ENCODE measurements at regions of chr7 and their contacts with region 1.

Region 1: GRCh38 chr7:17063045-17063383 is 181.2 kb upstream of the AGR3 start:
- DNase-seq: no peak
- H3K4me3 ChIP-seq: no peak overlapping the region
- H3K4me3 Mint-ChIP-seq: no peak overlapping the region
- H3K27ac ChIP-seq: no peak overlapping the region
- H3K27ac Mint-ChIP-seq: no peak overlapping the region
- H3K4me1 ChIP-seq: peaks cover 31 to 37% of the 10 kb centered on the region in 2 donors
- H3K4me1 Mint-ChIP-seq: peaks cover 34% of the 10 kb centered on the region
- H3K27me3 ChIP-seq: no peaks in the 10 kb centered on the region
- H3K27me3 Mint-ChIP-seq: no peaks in the 10 kb centered on the region
- CTCF ChIP-seq: peak; percentile 19

Region 2: DNA sequence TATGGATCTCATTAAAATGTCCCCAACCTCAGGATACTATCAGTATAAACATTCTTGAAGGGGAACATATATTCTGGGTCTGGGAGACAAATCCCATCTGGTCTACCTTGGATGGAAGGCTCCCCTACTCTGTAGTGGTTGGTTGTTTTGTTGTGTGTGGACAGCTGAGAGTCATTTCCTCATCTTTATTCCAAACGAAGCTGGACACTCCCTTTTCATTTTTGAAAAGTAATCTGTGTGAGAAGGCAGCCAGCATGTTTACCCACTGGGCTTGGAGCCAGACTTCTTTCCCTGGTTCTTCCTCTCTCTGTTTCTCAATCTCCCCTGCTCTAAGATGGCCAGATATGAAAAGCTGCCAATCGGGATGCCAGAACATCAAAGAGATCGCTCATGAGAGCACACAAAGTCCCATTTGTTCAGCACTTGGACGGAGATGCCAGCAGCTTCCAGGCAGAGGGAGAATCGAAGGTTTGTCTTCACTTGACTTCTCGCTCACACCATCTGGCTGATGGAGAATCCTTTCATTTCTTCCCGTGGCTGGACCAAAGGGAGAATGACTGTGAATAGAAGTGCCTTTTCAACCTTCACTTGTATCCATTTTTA is 73.1 kb before region 1 on chr7:
- intact Hi-C with region 1: loop called in 1 of 2 experiments (anchors 10 kb)
- DNase-seq: peak; percentile 10 to 35 (median 12)
- H3K4me3 ChIP-seq: peak overlapping the region; percentile 9 to 57 (median 25)
- H3K4me3 Mint-ChIP-seq: peak overlapping the region; percentile 82 to 93
- H3K27ac ChIP-seq: peak overlapping the region in 1 of 2 donors; percentile 57
- H3K27ac Mint-ChIP-seq: peak overlapping the region; percentile 21 to 95 (median 82)
- H3K4me1 ChIP-seq: peaks cover 9 to 25% of the 10 kb centered on the region in 2 donors
- H3K4me1 Mint-ChIP-seq: peaks cover 28% of the 10 kb centered on the region
- H3K27me3 ChIP-seq: no peaks in the 10 kb centered on the region
- H3K27me3 Mint-ChIP-seq: peaks cover 0 to 1% (median 0%) of the 10 kb centered on the region in 3 donors
- CTCF ChIP-seq: no peak

Region 3: GRCh38 chr7:17123020-17123419 is 60.0 kb after region 1 on chr7:
- intact Hi-C with region 1: loop called in 1 of 2 experiments (anchors 10 kb)
- DNase-seq: peak; percentile 73 to 95 (median 93)
- H3K4me3 ChIP-seq: peak overlapping the region in 1 of 3 experiments; percentile 42
- H3K4me3 Mint-ChIP-seq: peak overlapping the region in 1 of 2 donors; percentile 53
- H3K27ac ChIP-seq: peak overlapping the region in 1 of 2 donors; percentile 76
- H3K27ac Mint-ChIP-seq: peak overlapping the region; percentile 87 to 95 (median 92)
- H3K4me1 ChIP-seq: peaks cover 44 to 60% of the 10 kb centered on the region in 2 donors
- H3K4me1 Mint-ChIP-seq: peaks cover 58% of the 10 kb centered on the region
- H3K27me3 ChIP-seq: no peaks in the 10 kb centered on the region
- H3K27me3 Mint-ChIP-seq: peaks cover 0 to 1% (median 0%) of the 10 kb centered on the region in 3 donors
- CTCF ChIP-seq: no peak

Region 4: GRCh38 chr7:17144322-17144721 is 81.3 kb after region 1 on chr7:
- intact Hi-C with region 1: loop called in 1 of 2 experiments (anchors 10 kb)
- DNase-seq: peak; percentile 80 to 89 (median 81)
- H3K4me3 ChIP-seq: no peak overlapping the region
- H3K4me3 Mint-ChIP-seq: peak overlapping the region in 1 of 2 donors; percentile 36
- H3K27ac ChIP-seq: peak overlapping the region in 1 of 2 donors; percentile 88
- H3K27ac Mint-ChIP-seq: peak overlapping the region; percentile 47 to 96 (median 88)
- H3K4me1 ChIP-seq: peaks cover 24 to 34% of the 10 kb centered on the region in 2 donors
- H3K4me1 Mint-ChIP-seq: peaks cover 29% of the 10 kb centered on the region
- H3K27me3 ChIP-seq: no peaks in the 10 kb centered on the region
- H3K27me3 Mint-ChIP-seq: peaks cover 0 to 1% (median 0%) of the 10 kb centered on the region in 3 donors
- CTCF ChIP-seq: no peak

Region 5: GRCh38 chr7:17234398-17235031 is 171.5 kb after region 1 on chr7:
- intact Hi-C with region 1: loop called in 1 of 2 experiments (anchors 10 kb)
- DNase-seq: peak; percentile 93 to 99 (median 97)
- H3K4me3 ChIP-seq: peak overlapping the region; percentile 12 to 29 (median 19)
- H3K4me3 Mint-ChIP-seq: peak overlapping the region; percentile 68 to 81
- H3K27ac ChIP-seq: peak overlapping the region; percentile 96 to 100
- H3K27ac Mint-ChIP-seq: peak overlapping the region; percentile 99 to 100 (median 100)
- H3K4me1 ChIP-seq: peaks cover 19 to 24% of the 10 kb centered on the region in 2 donors
- H3K4me1 Mint-ChIP-seq: peaks cover 26% of the 10 kb centered on the region
- H3K27me3 ChIP-seq: no peaks in the 10 kb centered on the region
- H3K27me3 Mint-ChIP-seq: peaks cover 0 to 3% (median 0%) of the 10 kb centered on the region in 3 donors
- CTCF ChIP-seq: no peak

Measured in CD14-positive monocyte (primary cell).